ENCODE measurements at regions of chr10 and their contacts with region 1.

Region 1: DNA sequence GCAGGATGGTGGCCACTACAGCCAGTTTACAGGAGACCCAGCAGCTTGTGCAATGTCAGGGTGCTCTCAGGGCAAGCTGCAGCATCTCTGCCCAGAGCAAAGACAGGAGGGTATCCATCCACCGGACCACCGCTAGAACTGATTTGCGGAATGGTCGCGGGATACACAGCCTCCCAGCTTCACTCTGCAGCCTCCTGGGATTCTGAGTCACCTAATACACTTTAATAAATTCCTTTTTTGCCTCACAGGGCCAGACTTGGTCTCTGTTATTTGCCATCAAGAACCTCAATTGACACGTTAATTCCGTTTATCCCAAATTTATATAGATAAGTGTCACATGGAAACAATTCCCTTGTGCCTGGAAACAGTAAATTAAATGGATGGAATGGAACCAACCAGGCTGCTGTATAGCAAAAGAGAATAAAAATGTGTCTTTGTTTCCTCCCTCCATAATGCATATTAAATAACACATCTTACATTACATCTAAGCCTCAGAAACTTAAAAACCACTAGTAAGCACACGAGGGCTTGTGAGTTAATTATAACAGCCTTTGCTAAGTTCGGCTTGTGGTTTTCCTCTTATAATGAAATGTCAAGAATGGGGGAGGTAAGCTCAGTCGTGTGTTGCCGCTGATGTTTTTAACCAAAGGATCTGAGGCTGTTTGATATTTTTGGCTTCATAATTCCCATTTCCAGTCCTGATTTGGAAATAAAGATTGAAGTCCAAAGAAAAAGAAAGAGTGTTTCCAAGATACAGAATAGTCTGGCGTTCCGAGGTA is 52.1 kb downstream of the ADRB1 start:
- DNase-seq: no peak
- ATAC-seq: no peak

Region 2: DNA sequence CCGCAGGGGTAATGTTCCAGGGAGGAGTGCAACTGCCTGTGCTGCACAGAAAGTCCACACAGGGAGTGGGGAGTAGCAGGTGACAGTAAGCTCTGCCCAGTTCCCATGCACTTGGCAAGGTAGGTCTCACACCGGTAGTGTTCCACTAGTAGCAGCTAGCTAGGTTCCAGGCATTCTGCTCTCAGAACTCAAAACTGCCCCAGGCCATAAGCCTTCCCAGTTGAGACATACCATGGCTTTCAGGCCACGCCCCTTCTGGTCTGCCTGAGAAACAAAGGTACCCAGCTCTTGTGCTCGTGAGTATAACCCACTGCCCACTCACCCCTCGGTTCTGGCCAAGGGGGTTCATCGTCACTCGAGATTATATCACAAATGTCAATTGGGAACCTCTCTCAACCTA is 403.5 kb before region 1 on chr10:
- intact Hi-C with region 1: loop called in 1 of 2 experiments (anchors 10 kb)
- DNase-seq: no peak
- ATAC-seq: no peak